GM12878 (cell line): ENCODE measurements at regions of chr6 and their contacts with region 1.

Region 1: DNA sequence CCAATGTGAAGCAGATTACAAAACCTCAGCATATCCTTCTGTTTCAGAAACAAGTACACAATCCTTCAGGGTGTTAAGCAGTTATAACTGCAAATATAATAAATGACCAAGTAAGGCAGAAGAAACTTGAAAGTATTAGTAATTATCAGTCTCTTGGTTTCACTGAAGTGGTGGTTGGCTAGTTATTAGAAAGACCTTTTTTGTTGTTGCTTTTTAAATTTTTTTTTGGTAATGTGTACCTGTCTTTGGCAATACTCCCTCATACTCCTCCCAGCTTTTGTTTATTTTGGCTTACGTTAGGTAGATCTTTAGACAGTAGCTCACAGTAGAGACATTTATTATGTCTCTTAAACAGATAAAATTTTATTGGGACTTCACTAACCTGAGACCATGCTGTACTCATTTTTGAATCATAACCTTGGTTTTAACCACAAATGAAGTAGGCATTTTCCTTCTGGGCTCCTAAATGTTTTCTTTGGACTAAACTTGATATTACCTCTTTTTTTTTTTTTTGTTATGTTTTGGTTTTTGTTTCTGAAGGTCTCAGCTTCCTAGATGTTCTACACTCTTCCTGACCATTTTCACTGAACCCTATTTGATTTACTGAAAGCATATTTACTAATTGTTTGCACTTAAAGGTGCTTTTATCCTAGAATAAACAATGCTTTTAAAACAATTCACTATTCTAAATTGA is 6.4 kb downstream of the CD2AP start:
- DNase-seq: no peak
- ATAC-seq: peak; percentile 42
- H3K4me3 ChIP-seq: 0 out of 2 replicates have a peak overlapping the region, but pooled peaks have one; percentile 21
- H3K27ac ChIP-seq: peak overlapping the region; percentile 32; the same call in 1 of the 2 replicates
- H3K4me1 ChIP-seq: peaks cover 10% of the 10 kb centered on the region
- H3K27me3 ChIP-seq: no peaks in the 10 kb centered on the region
- CTCF ChIP-seq: no peak
- EP300 ChIP-seq: no peak
- POLR2A ChIP-seq: no peak
- RAD21 ChIP-seq: no peak

Region 2: DNA sequence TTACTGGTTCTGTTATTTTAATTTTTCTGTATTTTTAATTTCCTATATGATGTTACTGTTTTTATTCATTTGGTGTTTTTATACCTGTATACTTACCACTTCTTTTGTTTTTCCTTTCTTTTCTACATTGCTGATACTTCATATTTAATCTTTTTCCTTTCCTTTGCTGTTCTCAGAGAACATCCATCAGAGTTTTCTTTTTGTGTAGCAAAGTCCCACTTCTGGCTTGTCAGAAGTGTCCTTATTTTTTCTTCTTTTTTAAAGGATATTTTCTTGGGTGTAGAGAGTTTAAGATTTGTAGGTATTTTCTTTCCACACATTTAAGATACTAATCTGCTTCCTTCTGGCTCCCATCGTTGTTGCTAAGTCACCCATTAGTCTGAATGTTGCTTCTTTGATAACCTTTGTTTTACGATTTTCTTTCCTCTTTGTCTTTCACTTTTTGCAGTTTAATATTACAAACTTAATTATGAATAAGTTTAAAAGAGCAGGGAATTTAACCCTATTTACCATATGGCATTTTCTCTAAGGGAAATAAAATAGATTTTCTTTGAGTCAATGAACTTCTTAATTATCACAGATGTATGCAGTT is 12.1 kb after region 1 on chr6:
- CTCF ChIA-PET with region 1: interaction called, 3 read pairs
- POLR2A ChIA-PET with region 1: interaction called, 7 read pairs
- RAD21 ChIA-PET with region 1: interaction called, 9 read pairs
- SMC1A ChIA-PET with region 1: interaction called, 21 read pairs
- in situ Hi-C with region 1: no loop called
- intact Hi-C with region 1: no loop called
- DNase-seq: no peak
- ATAC-seq: no peak
- H3K4me3 ChIP-seq: no peak overlapping the region
- H3K27ac ChIP-seq: no peak overlapping the region
- H3K4me1 ChIP-seq: 0 out of 2 replicates have a peak, but pooled peaks cover under 1% of the 10 kb centered on the region
- H3K27me3 ChIP-seq: no peaks in the 10 kb centered on the region
- CTCF ChIP-seq: no peak
- EP300 ChIP-seq: no peak
- POLR2A ChIP-seq: no peak
- RAD21 ChIP-seq: no peak